ENCODE measurements at regions of chr7 and their contacts with region 1.

Region 1: DNA sequence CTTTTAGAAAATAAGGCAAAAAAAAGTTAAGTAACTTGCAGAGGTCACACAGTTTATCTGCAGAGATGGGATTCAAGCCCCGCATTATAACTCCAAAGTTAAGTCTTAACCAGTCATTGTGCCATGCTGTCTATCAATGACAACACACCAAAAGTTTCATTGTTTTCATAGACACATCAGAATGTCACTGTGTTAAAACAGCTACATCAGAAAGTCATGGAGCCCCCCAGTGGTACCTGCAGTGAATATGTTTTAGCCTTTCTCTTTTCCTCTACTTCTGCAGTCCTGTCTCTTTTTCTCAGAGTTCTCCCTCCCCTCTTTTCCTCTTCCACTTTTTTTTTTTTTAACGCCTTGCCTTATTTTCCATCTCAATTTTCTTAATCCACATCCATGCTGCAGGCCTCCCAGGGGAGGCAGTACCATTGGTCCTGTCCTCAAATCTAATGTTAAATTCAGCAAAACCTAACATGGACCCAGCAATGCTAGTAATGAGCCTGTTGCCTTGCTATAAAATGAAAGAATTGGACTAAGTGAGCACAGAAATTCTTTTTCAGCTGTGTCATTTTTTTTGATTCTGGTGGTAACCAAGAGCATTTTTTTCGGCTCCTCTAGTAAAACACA is 3.8 kb upstream of the NRCAM start:
- DNase-seq: peak; percentile 56
- H3K4me3 Mint-ChIP-seq: no peak overlapping the region
- H3K27ac Mint-ChIP-seq: no peak overlapping the region
- H3K4me1 Mint-ChIP-seq: peaks cover 30% of the 10 kb centered on the region
- H3K27me3 Mint-ChIP-seq: peaks cover 22% of the 10 kb centered on the region

Region 2: DNA sequence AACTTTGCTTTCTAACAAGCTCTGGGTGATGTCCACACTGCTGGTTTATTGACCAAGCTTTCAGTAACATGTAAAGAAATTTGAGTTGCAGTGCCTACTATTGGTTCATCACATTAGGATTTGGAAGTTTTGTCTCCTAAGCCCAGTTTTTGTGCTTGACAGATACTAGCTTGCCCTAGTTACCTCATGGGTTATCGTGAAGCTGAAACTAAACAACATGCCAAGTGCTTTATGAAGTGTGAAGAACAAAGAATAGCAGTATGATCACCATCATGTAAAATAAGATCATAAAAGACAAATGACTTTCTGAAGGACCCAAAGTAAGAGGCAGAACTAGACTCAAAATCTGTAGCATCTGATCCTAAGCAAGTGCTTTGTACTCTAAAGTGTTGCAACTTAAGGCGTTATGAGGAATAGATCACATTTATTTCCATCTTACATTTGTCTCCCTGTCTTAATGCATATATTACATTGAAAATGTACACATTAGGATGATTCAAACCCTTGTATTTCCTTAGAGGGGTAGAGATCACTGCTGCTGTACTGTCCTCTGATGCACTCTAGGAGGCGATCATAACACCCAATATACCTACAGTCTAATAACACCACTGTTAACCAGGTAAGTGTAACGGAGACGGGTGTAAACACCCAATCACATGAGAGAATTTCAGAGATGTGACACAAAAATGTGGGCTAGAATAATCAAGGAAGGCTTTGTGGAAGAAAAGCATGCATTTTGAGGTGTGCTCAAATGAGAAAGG is 75.1 kb before region 1 on chr7:
- CTCF ChIA-PET with region 1: interaction called, 4 read pairs
- intact Hi-C with region 1: loop called (anchors 1 kb)
- DNase-seq: no peak
- H3K4me3 Mint-ChIP-seq: no peak overlapping the region
- H3K27ac Mint-ChIP-seq: no peak overlapping the region
- H3K4me1 Mint-ChIP-seq: peaks cover 3% of the 10 kb centered on the region
- H3K27me3 Mint-ChIP-seq: no peaks in the 10 kb centered on the region

Region 3: GRCh38 chr7:108419961-108420908 is 39.8 kb before region 1 on chr7:
- CTCF ChIA-PET with region 1: interaction called, 3 read pairs
- intact Hi-C with region 1: loop called (anchors 5 kb)
- DNase-seq: no peak
- H3K4me3 Mint-ChIP-seq: no peak overlapping the region
- H3K27ac Mint-ChIP-seq: no peak overlapping the region
- H3K4me1 Mint-ChIP-seq: peaks cover 49% of the 10 kb centered on the region
- H3K27me3 Mint-ChIP-seq: peaks cover 24% of the 10 kb centered on the region

Region 4: GRCh38 chr7:108436906-108437305 is 23.1 kb before region 1 on chr7:
- CTCF ChIA-PET with region 1: no interaction called
- intact Hi-C with region 1: no loop called
- DNase-seq: no peak
- H3K4me3 Mint-ChIP-seq: no peak overlapping the region
- H3K27ac Mint-ChIP-seq: no peak overlapping the region
- H3K4me1 Mint-ChIP-seq: peaks cover under 1% of the 10 kb centered on the region
- H3K27me3 Mint-ChIP-seq: peaks cover 9% of the 10 kb centered on the region

Measured in activated naive CD4-positive, alpha-beta T cell treated with anti-CD3 and anti-CD28 coated beads for 36 hours (primary cell).